GM12878 (cell line): ENCODE measurements at regions of chr7 and their contacts with region 1.

Region 1: GRCh38 chr7:26376175-26376917 is 84.7 kb downstream of the SNX10 start:
- DNase-seq: no peak
- ATAC-seq: peak; percentile 71
- H3K4me3 ChIP-seq: peak overlapping the region; percentile 63
- H3K27ac ChIP-seq: no peak overlapping the region
- H3K4me1 ChIP-seq: peaks cover 7% of the 10 kb centered on the region
- H3K27me3 ChIP-seq: no peaks in the 10 kb centered on the region
- CTCF ChIP-seq: no peak
- EP300 ChIP-seq: no peak
- POLR2A ChIP-seq: no peak
- RAD21 ChIP-seq: no peak

Region 2: GRCh38 chr7:26237035-26237807 is 139.1 kb before region 1 on chr7:
- CTCF ChIA-PET with region 1: no interaction called
- POLR2A ChIA-PET with region 1: no interaction called
- RAD21 ChIA-PET with region 1: no interaction called
- SMC1A ChIA-PET with region 1: no interaction called
- in situ Hi-C with region 1: no loop called
- intact Hi-C with region 1: no loop called
- DNase-seq: no peak
- ATAC-seq: no peak
- H3K4me3 ChIP-seq: no peak overlapping the region
- H3K27ac ChIP-seq: no peak overlapping the region
- H3K4me1 ChIP-seq: no peaks in the 10 kb centered on the region
- H3K27me3 ChIP-seq: peaks cover 0 to 3% of the 10 kb centered on the region in 2 experiments; a peak in 1 of 4 replicates
- CTCF ChIP-seq: no peak
- EP300 ChIP-seq: no peak
- POLR2A ChIP-seq: no peak
- RAD21 ChIP-seq: no peak

Region 3: DNA sequence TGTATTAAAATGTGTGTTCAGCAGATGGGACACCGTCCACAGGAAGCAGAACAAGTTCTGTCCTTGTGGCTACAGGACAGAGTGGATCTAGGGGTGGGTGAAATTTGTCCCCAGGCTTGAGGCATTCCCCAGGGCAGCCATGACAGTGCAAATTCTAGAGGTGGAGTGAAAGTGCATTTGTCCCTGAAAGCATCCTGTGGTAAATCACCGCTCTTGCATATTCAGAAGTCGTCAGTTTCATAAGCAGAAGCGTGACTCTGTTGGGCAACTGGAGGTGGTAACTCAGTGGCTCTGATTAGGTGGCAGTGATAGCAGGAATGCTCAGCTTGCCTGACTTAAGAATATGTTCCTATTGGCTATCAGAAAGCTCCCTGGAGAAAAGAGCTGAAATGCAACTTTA is 11.9 kb after region 1 on chr7:
- CTCF ChIA-PET with region 1: interaction called, 10 read pairs
- POLR2A ChIA-PET with region 1: no interaction called
- RAD21 ChIA-PET with region 1: no interaction called
- SMC1A ChIA-PET with region 1: interaction called, 17 read pairs
- in situ Hi-C with region 1: no loop called
- intact Hi-C with region 1: no loop called
- DNase-seq: peak; percentile 20
- ATAC-seq: peak; percentile 92
- H3K4me3 ChIP-seq: no peak overlapping the region
- H3K27ac ChIP-seq: no peak overlapping the region
- H3K4me1 ChIP-seq: peaks cover 8% of the 10 kb centered on the region; the same call in 1 of the 2 replicates
- H3K27me3 ChIP-seq: peaks cover 0 to 2% of the 10 kb centered on the region in 2 experiments; a peak in 2 of 4 replicates
- CTCF ChIP-seq: no peak
- EP300 ChIP-seq: no peak
- POLR2A ChIP-seq: no peak
- RAD21 ChIP-seq: no peak